Aorta (tissue), 5 donors: ENCODE measurements at regions of chr7 and their contacts with region 1.

Region 1: DNA sequence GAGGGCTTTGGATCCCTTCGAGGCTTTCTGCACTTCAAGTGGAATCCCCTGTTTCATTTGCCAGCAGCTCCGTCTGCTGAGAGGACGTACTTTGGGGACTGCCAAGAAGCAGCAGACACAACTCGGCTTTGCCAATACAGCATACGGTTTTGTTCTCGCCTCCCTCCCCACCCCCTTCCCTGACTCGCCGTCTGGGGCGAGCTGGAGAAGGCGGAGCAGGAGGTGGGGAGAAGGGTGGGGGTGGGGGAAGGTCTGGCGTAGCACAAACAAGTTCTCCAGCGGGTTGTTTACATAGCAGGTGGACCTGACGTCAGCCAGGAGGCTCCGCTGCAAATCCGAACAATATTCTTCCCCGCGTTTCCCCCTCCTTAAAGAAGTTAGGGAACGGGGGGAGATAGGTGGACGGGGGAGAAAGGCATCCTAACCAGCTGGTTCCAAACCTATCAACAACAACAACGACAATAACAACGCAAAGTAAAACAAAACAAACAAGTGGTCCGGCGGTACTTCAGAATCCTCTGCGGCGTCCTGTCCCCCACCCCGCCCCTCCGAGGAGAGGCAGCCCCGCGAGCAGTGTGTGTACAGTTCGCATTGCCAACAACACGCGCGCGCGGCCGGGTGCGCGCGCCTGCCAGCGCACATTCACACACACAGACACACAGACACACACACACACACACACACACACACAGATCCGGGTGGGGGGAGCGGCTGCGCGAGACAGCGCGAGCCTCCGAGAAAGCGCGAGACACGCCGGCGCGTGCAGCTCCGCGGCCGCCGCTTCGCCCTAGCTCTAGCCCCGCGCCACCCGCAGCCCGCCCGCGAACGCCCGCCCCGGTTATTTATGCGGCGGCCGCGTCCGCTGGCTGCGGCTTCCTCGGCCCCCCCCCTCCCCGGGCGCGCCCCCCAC is 167.0 kb upstream of the PPP1R3A start:
- DNase-seq: peak; percentile 87 to 93
- ATAC-seq: peak; percentile 91
- H3K4me3 ChIP-seq: peak overlapping the region; percentile 85 to 91
- H3K27ac ChIP-seq: peak overlapping the region; percentile 92 to 96
- H3K4me1 ChIP-seq: no peaks in the 10 kb centered on the region
- H3K27me3 ChIP-seq: no peaks in the 10 kb centered on the region

Region 2: DNA sequence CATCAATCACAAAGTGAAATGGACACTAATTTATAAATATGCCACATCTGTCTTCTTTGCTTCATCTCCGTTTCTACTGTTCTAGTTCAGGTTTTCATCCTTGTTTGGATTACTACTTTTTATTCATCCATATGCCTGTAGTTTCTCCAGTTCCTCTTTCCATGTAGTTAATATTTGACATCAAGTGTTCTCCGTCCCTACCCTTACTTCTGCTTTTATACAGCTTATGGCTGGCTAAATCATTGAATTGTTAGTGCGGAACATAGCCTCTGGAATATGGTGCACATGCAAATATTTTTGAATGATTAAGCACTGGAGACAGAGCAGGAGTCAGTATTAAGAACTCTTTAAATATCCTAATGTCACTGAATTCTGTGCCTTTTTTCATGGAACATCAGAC is 62.9 kb after region 1 on chr7:
- intact Hi-C with region 1: no loop called
- DNase-seq: no peak
- ATAC-seq: no peak
- H3K4me3 ChIP-seq: no peak overlapping the region
- H3K27ac ChIP-seq: no peak overlapping the region
- H3K4me1 ChIP-seq: no peaks in the 10 kb centered on the region
- H3K27me3 ChIP-seq: no peaks in the 10 kb centered on the region

Region 3: GRCh38 chr7:114405427-114405826 is 319.6 kb after region 1 on chr7:
- intact Hi-C with region 1: loop called in 1 of 2 experiments (anchors 5 kb)
- DNase-seq: no peak
- ATAC-seq: no peak
- H3K4me3 ChIP-seq: no peak overlapping the region
- H3K27ac ChIP-seq: no peak overlapping the region
- H3K4me1 ChIP-seq: no peaks in the 10 kb centered on the region
- H3K27me3 ChIP-seq: no peaks in the 10 kb centered on the region

Region 4: DNA sequence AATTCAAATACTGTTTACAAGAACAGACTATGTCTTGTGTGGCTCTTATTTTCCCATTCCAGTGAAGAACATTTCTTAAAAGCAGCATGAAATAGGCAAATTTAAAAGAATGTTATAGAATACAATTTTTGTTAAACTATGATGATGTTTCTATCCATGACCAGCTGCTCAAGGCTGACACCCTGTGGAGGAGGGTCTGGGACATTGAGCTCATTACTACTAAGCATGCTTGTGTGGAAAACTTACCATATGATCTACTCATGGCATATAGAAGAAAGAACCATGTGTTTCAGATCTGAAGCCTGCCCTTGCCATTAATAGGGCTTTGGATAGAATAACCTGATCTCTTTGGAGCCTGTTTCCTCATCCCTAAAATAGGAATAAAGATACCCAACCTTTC is 453.7 kb after region 1 on chr7:
- intact Hi-C with region 1: loop called (anchors 10 kb)
- DNase-seq: no peak
- ATAC-seq: no peak
- H3K4me3 ChIP-seq: no peak overlapping the region
- H3K27ac ChIP-seq: no peak overlapping the region
- H3K4me1 ChIP-seq: no peaks in the 10 kb centered on the region
- H3K27me3 ChIP-seq: no peaks in the 10 kb centered on the region

Region 5: GRCh38 chr7:114922016-114922651 is 836.3 kb after region 1 on chr7 and contains the start of gene MDFIC:
- intact Hi-C with region 1: loop called in 1 of 2 experiments (anchors 5 kb)
- DNase-seq: peak; percentile 79 to 90
- ATAC-seq: peak; percentile 92
- H3K4me3 ChIP-seq: peak within 1 kb of the TSS; percentile 23 to 91
- H3K27ac ChIP-seq: peak within 1 kb of the TSS; percentile 53 to 95
- H3K4me1 ChIP-seq: no peaks in the 10 kb centered on the region
- H3K27me3 ChIP-seq: no peaks in the 10 kb centered on the region
- total RNA-seq, gene MDFIC: 25.3 to 37.2 TPM

Region 6: DNA sequence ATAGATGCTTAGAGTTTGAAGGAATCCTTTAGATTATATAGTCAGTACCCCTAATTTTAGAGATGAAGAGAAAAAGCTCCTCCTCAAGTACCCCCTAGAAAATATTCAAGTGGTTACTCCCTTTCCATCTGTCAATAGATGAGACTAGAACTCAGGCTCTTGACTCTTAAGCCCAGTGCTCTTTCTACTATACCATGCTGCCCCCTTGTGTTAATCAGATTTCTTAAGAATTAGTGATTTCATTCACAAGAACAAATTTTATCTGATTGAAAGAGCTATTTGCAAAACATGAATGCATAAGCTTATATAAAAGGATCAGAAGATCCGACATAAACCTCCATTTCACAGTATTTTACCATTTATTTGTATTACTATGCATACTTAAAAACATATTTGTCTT is 1765.4 kb after region 1 on chr7:
- intact Hi-C with region 1: loop called in 1 of 2 experiments (anchors 5 kb)
- DNase-seq: no peak
- ATAC-seq: no peak
- H3K4me3 ChIP-seq: no peak overlapping the region
- H3K27ac ChIP-seq: no peak overlapping the region
- H3K4me1 ChIP-seq: no peaks in the 10 kb centered on the region
- H3K27me3 ChIP-seq: no peaks in the 10 kb centered on the region